ENCODE measurements at regions of chr12 and their contacts with region 1.

Region 1: DNA sequence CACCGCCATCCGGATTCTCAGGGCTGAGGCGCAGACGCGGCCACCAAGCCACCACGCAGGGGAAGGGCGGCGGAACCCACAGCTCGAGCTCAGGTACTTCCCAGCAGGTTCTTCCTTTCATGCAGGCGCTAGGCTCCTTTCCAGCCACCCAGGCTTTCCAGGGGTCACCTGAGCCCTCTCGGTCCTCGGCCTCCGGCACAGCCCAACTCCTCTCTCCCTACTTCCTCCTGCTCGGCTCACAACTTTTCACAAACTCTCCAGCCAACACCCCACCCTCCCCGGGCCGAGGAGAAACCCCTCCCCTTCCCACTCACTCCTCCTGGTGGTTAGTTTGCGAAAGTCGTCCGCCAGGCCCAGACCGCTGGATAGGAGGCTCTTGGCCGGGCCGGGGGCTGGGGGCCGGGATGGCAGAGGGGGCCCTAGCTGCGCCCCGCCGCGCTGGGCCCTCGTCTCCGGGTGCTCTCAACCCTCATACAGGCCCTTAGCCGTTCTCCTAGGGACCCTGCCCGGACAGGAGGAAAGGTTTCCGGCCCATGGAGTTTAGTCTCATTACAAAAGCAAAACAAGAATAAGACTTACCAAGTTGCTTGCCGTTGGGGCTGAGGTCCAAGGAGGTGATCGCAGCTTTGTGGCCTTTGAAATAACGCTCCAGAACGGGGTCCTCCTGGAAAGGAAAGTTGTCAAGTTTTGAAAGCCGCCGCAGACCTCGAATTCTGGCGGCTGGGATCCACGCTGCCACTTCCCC is at the start of gene GALNT4:
- DNase-seq: peak; percentile 91
- ATAC-seq: peak; percentile 76
- H3K4me3 ChIP-seq: peak within 1 kb of the TSS; percentile 72 to 98 (median 85)
- H3K4me3 Mint-ChIP-seq: peak within 1 kb of the TSS; percentile 96
- H3K27ac ChIP-seq: peak within 1 kb of the TSS; percentile 90 to 91
- H3K27ac Mint-ChIP-seq: peak within 1 kb of the TSS; percentile 93
- H3K4me1 ChIP-seq: peaks cover 32 to 40% of the 10 kb centered on the region in 2 donors
- H3K4me1 Mint-ChIP-seq: peaks cover 62% of the 10 kb centered on the region
- H3K27me3 ChIP-seq: no peaks in the 10 kb centered on the region
- H3K27me3 Mint-ChIP-seq: no peaks in the 10 kb centered on the region
- CTCF ChIP-seq: peak; percentile 73
- total RNA-seq, gene GALNT4: 8.3 and 10.3 TPM in 2 replicates

Region 2: DNA sequence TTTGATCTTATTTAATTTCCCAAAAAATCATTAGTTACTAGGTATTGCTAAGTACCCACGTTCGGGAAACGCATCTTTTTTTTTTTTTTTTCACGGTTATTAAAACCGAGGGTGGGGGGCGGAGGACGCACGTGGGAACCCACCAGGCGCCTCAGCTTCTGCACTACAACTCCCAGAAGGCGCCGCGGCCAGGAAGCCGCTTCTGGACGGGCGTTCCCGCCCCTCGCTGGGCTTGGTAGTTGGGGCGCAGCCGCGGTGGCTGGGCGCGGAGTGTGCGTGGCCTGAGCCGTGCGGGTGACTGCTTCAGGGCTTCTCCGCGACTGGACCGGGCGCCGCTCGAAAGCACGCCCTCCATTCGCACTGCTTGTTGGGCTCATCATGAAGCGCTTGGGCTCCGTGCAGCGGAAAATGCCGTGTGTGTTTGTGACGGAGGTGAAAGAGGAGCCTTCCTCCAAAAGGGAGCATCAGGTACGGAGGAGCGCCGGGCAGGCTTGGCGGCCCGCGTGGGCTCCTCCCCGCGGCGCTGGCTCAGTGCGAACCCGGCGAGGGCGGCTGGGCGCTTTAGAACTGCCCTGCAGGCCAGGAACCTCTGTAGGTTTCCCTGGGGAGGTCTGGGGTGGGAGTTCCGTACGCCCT is 1489.3 kb before region 1 on chr12:
- CTCF ChIA-PET with region 1: no interaction called
- POLR2A ChIA-PET with region 1: no interaction called
- intact Hi-C with region 1: loop called (anchors 5 kb)
- DNase-seq: peak; percentile 88
- ATAC-seq: peak; percentile 97
- H3K4me3 ChIP-seq: peak overlapping the region; percentile 62 to 93 (median 90)
- H3K4me3 Mint-ChIP-seq: peak overlapping the region; percentile 99
- H3K27ac ChIP-seq: peak overlapping the region; percentile 47 to 74
- H3K27ac Mint-ChIP-seq: peak overlapping the region; percentile 92
- H3K4me1 ChIP-seq: peaks cover 16 to 17% of the 10 kb centered on the region in 2 donors
- H3K4me1 Mint-ChIP-seq: peaks cover 30% of the 10 kb centered on the region
- H3K27me3 ChIP-seq: no peaks in the 10 kb centered on the region
- H3K27me3 Mint-ChIP-seq: no peaks in the 10 kb centered on the region
- CTCF ChIP-seq: no peak

Region 3: GRCh38 chr12:89051065-89051677 is 473.5 kb before region 1 on chr12:
- CTCF ChIA-PET with region 1: interaction called, 14 read pairs
- POLR2A ChIA-PET with region 1: no interaction called
- intact Hi-C with region 1: loop called (anchors 1 kb)
- DNase-seq: peak; percentile 74
- ATAC-seq: peak; percentile 53
- H3K4me3 ChIP-seq: no peak overlapping the region
- H3K4me3 Mint-ChIP-seq: no peak overlapping the region
- H3K27ac ChIP-seq: no peak overlapping the region
- H3K27ac Mint-ChIP-seq: no peak overlapping the region
- H3K4me1 ChIP-seq: no peaks in the 10 kb centered on the region
- H3K4me1 Mint-ChIP-seq: no peaks in the 10 kb centered on the region
- H3K27me3 ChIP-seq: no peaks in the 10 kb centered on the region
- H3K27me3 Mint-ChIP-seq: peaks cover 8% of the 10 kb centered on the region
- CTCF ChIP-seq: peak; percentile 88

Region 4: DNA sequence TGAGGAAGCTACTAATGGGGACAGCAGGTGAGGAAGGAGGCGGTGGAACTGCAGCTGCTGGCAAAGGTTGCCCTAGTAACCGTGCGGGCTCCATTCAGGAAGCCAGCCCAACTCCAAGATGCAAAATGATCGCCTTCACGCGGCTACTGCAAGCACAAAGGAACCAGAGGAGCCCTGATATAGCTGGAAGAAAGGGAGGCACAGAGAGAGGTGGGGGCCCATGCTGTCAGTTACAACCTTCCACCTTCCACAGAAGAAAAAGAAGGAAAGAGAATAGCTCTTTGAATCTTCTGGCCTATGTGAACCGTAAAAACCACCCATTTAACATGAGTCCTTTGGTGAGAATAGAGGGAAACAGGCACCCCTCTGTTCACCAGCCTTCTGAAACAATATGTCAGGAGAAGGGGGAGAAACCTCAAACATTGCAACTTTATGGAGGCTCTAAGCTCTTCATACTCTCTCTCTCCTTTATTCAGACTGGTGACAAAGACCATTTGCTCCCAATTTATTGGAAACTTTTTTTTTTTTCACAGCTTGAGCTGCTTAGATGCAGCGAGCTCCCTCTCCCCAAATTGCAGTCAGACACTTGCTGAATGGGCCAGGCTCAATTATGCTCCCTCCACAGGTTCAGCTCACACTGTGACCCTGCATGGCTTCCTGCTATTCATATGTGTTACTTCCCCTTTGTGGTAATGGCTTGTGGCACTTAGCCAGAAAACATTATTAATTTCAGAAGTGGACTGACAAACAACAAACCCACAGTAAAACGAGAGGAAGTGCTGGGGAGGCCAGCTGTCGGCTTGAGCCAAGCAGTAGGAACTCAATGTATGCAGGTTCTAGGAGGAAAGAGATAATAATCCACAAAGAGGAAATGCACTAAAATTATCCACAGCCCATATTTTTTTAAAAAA is 178.6 kb before region 1 on chr12:
- CTCF ChIA-PET with region 1: interaction called, 21 read pairs
- POLR2A ChIA-PET with region 1: interaction called, 4 read pairs
- intact Hi-C with region 1: loop called (anchors 1 kb)
- DNase-seq: peak; percentile 89
- ATAC-seq: peak; percentile 87
- H3K4me3 ChIP-seq: peak overlapping the region in 4 of 5 experiments; percentile 19 to 58 (median 38)
- H3K4me3 Mint-ChIP-seq: peak overlapping the region; percentile 80
- H3K27ac ChIP-seq: peak overlapping the region; percentile 29 to 43
- H3K27ac Mint-ChIP-seq: peak overlapping the region; percentile 47
- H3K4me1 ChIP-seq: peaks cover 53 to 55% of the 10 kb centered on the region in 2 donors
- H3K4me1 Mint-ChIP-seq: peaks cover 61% of the 10 kb centered on the region
- H3K27me3 ChIP-seq: no peaks in the 10 kb centered on the region
- H3K27me3 Mint-ChIP-seq: no peaks in the 10 kb centered on the region
- CTCF ChIP-seq: no peak

Region 5: DNA sequence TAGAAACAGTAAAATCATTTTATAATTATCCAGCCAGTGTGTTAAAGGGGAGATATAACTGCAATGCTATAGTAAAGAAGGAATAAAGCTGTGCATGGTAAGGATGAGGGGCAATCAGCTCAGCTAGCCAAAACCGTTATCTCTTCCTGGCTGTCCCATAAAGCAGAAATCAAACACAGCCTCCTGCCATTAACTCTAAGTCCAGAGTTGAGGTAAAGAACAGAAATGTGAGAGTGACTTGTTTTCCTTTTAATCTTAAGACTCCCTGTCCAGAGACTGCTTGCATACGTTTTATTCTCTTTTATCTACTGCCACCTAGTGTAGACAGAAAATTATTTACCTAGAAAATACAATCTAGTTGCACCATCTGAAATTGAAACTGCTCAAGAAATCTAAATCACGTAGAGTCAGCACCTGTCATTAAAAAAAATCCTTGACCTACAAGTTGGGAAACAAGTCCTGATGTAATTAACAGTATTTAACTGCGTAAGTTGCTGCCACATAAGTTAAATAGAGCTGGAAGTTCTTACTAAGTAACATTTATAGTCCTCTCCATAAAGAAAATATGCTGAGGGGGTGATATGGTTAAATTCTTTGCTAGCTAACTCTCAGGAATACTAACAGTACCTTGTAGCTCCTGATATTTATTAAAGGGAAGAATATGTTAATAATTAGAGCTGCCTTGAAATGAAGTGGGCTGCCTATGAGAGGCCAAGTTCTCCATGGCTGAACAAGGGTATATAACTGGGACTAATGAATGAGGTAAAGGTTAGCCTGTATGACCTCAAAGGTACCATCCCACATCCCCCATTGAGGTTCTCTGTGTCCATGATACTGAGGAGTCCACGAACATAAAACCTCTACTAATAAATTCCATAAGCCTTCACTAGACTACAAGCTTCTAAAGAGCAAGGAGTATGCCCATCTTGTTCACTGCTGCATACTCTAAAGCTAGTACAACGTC is 62.8 kb before region 1 on chr12:
- CTCF ChIA-PET with region 1: interaction called, 181 read pairs
- POLR2A ChIA-PET with region 1: no interaction called
- intact Hi-C with region 1: no loop called
- DNase-seq: peak; percentile 74
- ATAC-seq: peak; percentile 73
- H3K4me3 ChIP-seq: no peak overlapping the region
- H3K4me3 Mint-ChIP-seq: no peak overlapping the region
- H3K27ac ChIP-seq: no peak overlapping the region
- H3K27ac Mint-ChIP-seq: no peak overlapping the region
- H3K4me1 ChIP-seq: peaks cover 5 to 7% of the 10 kb centered on the region in 2 donors
- H3K4me1 Mint-ChIP-seq: peaks cover 18% of the 10 kb centered on the region
- H3K27me3 ChIP-seq: no peaks in the 10 kb centered on the region
- H3K27me3 Mint-ChIP-seq: no peaks in the 10 kb centered on the region
- CTCF ChIP-seq: peak; percentile 83

Region 6: GRCh38 chr12:89882050-89882449 is 357.3 kb after region 1 on chr12:
- CTCF ChIA-PET with region 1: no interaction called
- POLR2A ChIA-PET with region 1: no interaction called
- intact Hi-C with region 1: loop called (anchors 2 kb)
- DNase-seq: peak; percentile 58
- ATAC-seq: peak; percentile 22
- H3K4me3 ChIP-seq: peak overlapping the region in 1 of 5 experiments; percentile 3
- H3K4me3 Mint-ChIP-seq: peak overlapping the region; percentile 89
- H3K27ac ChIP-seq: peak overlapping the region; percentile 94 to 95
- H3K27ac Mint-ChIP-seq: peak overlapping the region; percentile 99
- H3K4me1 ChIP-seq: peaks cover 45 to 52% of the 10 kb centered on the region in 2 donors
- H3K4me1 Mint-ChIP-seq: peaks cover 52% of the 10 kb centered on the region
- H3K27me3 ChIP-seq: no peaks in the 10 kb centered on the region
- H3K27me3 Mint-ChIP-seq: no peaks in the 10 kb centered on the region
- CTCF ChIP-seq: no peak